Caco-2 (cell line): ENCODE measurements at regions of chr10 and their contacts with region 1.

Region 1: GRCh38 chr10:36888929-36889573 is 236.3 kb upstream of the ANKRD30A start:
- DNase-seq: peak; percentile 84 to 89
- H3K4me3 ChIP-seq: no peak overlapping the region
- H3K4me3 Mint-ChIP-seq: no peak overlapping the region
- H3K27ac Mint-ChIP-seq: no peak overlapping the region
- H3K4me1 ChIP-seq: peaks cover 5% of the 10 kb centered on the region; the same call in 1 of the 2 replicates
- H3K4me1 Mint-ChIP-seq: peaks cover 7% of the 10 kb centered on the region
- H3K27me3 ChIP-seq: no peaks in the 10 kb centered on the region
- H3K27me3 Mint-ChIP-seq: no peaks in the 10 kb centered on the region
- CTCF ChIP-seq: peak; percentile 96

Region 2: GRCh38 chr10:37434091-37434490 is 545.0 kb after region 1 on chr10:
- CTCF ChIA-PET with region 1: no interaction called
- POLR2A ChIA-PET with region 1: no interaction called
- intact Hi-C with region 1: loop called (anchors 1 kb)
- DNase-seq: peak in 1 of 2 experiments; percentile 6
- H3K4me3 ChIP-seq: no peak overlapping the region
- H3K4me3 Mint-ChIP-seq: no peak overlapping the region
- H3K27ac Mint-ChIP-seq: no peak overlapping the region
- H3K4me1 ChIP-seq: no peaks in the 10 kb centered on the region
- H3K4me1 Mint-ChIP-seq: no peaks in the 10 kb centered on the region
- H3K27me3 ChIP-seq: no peaks in the 10 kb centered on the region
- H3K27me3 Mint-ChIP-seq: no peaks in the 10 kb centered on the region
- CTCF ChIP-seq: peak; percentile 29 to 50